Colonic mucosa (tissue), 4 donors: ENCODE measurements at regions of chr4 and their contacts with region 1.

Region 1: GRCh38 chr4:184384056-184384809 is 90.1 kb downstream of the IRF2 start:
- DNase-seq: peak; percentile 63
- H3K4me3 ChIP-seq: no peak overlapping the region
- H3K27ac ChIP-seq: peak overlapping the region; percentile 92
- H3K4me1 ChIP-seq: peaks cover 28% of the 10 kb centered on the region
- H3K27me3 ChIP-seq: no peaks in the 10 kb centered on the region
- CTCF ChIP-seq: no peak

Region 2: DNA sequence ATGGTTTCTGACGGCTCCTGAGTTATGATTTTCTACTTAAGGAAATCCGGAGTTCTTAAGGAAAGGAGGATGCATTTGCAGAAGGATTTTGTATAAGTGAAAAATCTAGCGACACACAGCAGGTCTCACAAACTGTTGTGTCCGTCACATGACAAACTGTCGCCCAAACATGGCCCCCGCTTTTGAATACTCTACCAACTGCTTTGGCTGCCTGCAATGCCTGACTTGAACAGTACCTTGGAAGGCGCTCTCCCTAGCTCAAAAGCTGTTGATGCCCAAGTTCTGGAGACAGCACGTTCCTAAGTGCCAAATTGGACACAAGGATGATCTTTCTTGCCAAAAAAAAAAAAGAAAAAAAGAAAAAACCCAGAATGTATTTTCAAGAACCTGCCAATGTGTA is 269.8 kb before region 1 on chr4:
- intact Hi-C with region 1: no loop called
- DNase-seq: no peak
- H3K4me3 ChIP-seq: no peak overlapping the region
- H3K27ac ChIP-seq: no peak overlapping the region
- H3K4me1 ChIP-seq: no peaks in the 10 kb centered on the region
- H3K27me3 ChIP-seq: no peaks in the 10 kb centered on the region
- CTCF ChIP-seq: no peak

Region 3: DNA sequence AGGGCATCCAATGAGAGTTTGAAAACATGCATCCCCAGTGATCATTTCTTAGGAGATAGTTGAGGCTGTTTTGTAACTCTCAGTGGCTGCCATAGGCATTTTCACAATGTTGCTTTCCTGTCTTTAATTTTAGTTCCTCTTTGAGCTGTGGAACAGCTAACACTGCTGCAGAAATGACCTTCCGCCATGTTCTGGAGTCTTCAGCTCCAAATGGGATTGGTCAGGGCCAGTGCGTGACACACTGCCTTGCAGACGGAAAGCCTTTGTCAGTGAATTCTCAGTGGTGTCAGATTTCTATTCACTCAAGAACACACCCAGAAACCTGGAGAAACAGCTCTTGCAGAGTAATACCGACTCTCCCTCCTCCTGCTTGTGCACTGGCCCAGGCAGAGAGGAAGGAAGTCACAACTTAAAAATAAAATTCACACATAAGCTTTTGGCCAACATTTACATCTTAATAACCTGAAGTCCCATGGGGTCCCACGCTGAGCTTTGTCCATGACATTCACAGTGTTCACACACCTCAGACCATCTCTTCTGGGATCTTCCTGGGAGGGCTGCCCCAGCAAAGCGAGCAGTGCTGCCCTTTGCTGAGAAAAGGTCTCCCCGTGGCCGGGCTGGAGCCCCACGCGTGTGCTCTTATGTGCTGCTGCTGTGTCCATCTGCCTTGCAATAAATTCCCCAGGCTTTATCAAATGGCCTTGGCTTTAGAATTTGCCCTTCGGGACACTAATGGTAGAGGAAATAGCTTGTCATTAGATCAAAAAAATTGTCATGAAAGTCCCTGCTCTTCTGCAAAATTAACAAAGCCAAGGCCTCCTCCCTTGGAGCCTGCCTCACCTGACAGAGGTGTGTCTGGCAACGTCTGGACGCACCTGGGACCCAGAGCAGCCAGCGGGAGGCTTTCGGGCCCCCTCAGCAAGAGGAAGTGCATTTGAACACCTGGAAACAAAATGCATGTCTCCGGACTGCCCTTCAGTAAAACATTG is 36.7 kb before region 1 on chr4:
- intact Hi-C with region 1: loop called (anchors 5 kb)
- DNase-seq: peak; percentile 77
- H3K4me3 ChIP-seq: no peak overlapping the region
- H3K27ac ChIP-seq: peak overlapping the region; percentile 94
- H3K4me1 ChIP-seq: peaks cover 37% of the 10 kb centered on the region
- H3K27me3 ChIP-seq: no peaks in the 10 kb centered on the region
- CTCF ChIP-seq: no peak